Breast epithelium (tissue), 4 donors: ENCODE measurements at regions of chr2 and their contacts with region 1.

Region 1: DNA sequence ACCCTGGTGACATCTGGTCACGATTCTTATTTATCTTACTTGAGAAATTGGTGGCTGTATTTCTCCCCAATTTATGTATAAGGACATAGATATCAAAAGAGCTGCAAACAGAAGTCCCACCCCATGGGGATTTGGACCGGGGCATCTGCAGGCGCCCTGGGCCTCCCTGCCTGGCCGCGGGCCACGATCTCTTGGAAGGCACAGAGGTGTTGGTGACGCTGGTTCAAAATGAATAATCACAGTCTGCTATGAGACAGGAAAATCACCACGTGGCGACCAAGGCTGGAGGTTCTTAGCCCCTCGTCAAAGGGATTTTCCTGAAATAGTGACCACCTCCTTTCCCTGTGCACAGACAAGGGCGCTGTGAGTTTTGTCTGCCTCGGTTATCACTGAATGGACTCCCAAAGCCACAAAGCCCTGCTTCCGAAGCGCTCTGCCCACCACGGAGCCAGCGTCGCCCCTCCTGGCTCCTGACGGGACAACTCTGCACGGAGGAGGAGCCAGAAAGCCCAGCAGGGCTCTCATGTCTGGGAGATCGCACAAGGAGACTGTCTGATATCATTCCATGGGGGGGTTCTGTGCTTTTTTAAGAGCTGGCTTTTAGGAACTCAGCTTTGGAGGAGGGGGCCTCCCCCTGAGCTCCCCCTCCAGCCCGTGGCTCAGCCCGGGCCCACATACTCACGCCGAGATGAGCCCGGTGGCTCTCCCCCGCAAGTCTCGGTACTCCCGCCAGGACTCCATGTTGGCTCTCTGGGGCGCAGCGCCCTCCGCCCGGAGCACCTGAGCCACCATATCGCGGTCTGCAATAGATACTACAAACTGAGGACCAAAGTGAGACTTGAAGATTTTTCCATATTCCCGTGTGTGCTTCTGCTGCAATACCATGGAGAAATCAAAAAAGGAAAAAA is 14.6 kb downstream of the CYP27C1 start:
- DNase-seq: no peak
- H3K4me3 ChIP-seq: no peak overlapping the region
- H3K27ac ChIP-seq: no peak overlapping the region
- H3K4me1 ChIP-seq: no peaks in the 10 kb centered on the region
- H3K27me3 ChIP-seq: no peaks in the 10 kb centered on the region
- CTCF ChIP-seq: no peak
- POLR2A ChIP-seq: no peak

Region 2: GRCh38 chr2:127153691-127154158 is 51.7 kb before region 1 on chr2:
- intact Hi-C with region 1: loop called (anchors 2 kb)
- DNase-seq: no peak
- H3K4me3 ChIP-seq: no peak overlapping the region
- H3K27ac ChIP-seq: peak overlapping the region in 1 of 2 donors; percentile 81
- H3K4me1 ChIP-seq: peaks cover 0 to 3% of the 10 kb centered on the region in 2 donors
- H3K27me3 ChIP-seq: no peaks in the 10 kb centered on the region
- CTCF ChIP-seq: no peak
- POLR2A ChIP-seq: no peak